ENCODE measurements at regions of chr1 and their contacts with region 1.

Region 1: GRCh38 chr1:237219751-237220642 is 178.0 kb downstream of the RYR2 start:
- DNase-seq: no peak
- H3K4me3 ChIP-seq: no peak overlapping the region
- H3K27ac ChIP-seq: no peak overlapping the region
- H3K4me1 ChIP-seq: no peaks in the 10 kb centered on the region
- H3K27me3 ChIP-seq: no peaks in the 10 kb centered on the region
- CTCF ChIP-seq: no peak
- POLR2A ChIP-seq: no peak

Region 2: DNA sequence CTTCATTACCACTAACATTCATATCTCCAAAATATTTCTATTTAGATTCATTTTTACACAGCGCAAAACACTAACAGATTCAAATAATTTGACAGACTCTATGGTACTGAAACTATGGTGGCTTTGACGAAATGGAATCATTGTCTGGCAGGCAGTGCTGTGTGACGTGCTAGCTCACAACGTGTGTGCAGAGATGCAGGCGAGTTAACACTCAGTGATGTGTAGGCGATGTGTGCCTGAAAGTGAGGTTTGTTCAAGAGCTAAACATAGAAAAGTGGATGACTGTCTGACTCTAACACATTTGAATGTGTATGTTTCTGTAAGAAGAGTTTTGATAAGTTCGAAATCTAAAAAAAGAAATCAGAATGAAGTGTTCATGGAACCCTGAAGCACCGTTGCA is 80.3 kb before region 1 on chr1:
- intact Hi-C with region 1: no loop called
- DNase-seq: no peak
- H3K4me3 ChIP-seq: no peak overlapping the region
- H3K27ac ChIP-seq: no peak overlapping the region
- H3K4me1 ChIP-seq: peaks cover 11% of the 10 kb centered on the region
- H3K27me3 ChIP-seq: no peaks in the 10 kb centered on the region
- CTCF ChIP-seq: no peak
- POLR2A ChIP-seq: no peak

Region 3: DNA sequence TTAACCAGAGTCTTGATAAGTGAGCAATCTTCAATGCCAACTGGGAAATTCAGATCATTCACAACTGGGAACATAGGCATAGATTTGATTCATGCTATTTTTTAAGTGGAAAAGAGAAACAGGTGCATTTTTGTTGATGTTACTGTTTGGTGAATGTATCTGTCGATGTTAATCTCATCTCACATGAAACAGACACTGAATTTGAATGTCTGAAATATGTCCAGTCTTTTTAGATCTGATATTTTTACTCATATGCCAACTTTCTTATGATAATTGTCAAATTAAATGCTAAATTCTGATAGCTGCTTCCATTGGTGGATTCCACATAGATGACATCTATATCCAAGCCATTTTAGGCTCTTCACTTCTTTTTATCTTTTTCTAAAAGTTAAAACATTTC is 35.1 kb after region 1 on chr1:
- intact Hi-C with region 1: loop called (anchors 2 kb)
- DNase-seq: no peak
- H3K4me3 ChIP-seq: no peak overlapping the region
- H3K27ac ChIP-seq: no peak overlapping the region
- H3K4me1 ChIP-seq: no peaks in the 10 kb centered on the region
- H3K27me3 ChIP-seq: no peaks in the 10 kb centered on the region
- CTCF ChIP-seq: no peak
- POLR2A ChIP-seq: no peak

Region 4: DNA sequence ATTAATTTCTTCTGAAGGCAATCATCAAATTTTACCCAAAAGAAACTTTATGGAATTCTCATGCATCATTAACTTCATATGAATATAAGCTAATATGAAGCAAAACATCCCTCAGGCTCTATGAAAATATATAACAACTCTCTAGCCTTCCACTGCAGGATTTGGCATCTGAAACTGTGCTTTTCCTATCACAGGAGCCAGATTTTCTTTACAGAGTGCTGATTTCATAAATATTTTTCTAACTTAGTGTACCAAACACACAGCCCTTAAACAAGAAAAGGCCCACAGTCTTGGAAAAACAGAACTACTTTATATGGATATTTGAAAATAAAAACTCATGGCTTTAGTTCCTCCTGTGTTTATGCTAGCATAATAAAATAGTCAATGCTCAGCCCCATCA is 1606.9 kb after region 1 on chr1:
- intact Hi-C with region 1: no loop called
- DNase-seq: no peak
- H3K4me3 ChIP-seq: no peak overlapping the region
- H3K27ac ChIP-seq: no peak overlapping the region
- H3K4me1 ChIP-seq: no peaks in the 10 kb centered on the region
- H3K27me3 ChIP-seq: no peaks in the 10 kb centered on the region
- CTCF ChIP-seq: no peak
- POLR2A ChIP-seq: no peak

Measured in vagina (tissue), 2 donors.